Endothelial cell of umbilical vein (primary cell): ENCODE measurements at regions of chr17 and their contacts with region 1.

Region 1: GRCh38 chr17:75205037-75205792 is at the start of gene NUP85:
- DNase-seq: peak; percentile 96
- H3K4me3 ChIP-seq: peak within 1 kb of the TSS; percentile 58 to 91 (median 85)
- H3K27ac ChIP-seq: peak within 1 kb of the TSS; percentile 90
- H3K4me1 ChIP-seq: peaks cover 2% of the 10 kb centered on the region
- H3K27me3 ChIP-seq: no peaks in the 10 kb centered on the region
- CTCF ChIP-seq: no peak
- POLR2A ChIP-seq: peak; percentile 88
- total RNA-seq, gene NUP85: 98.3 and 105 TPM in 2 replicates

Region 2: GRCh38 chr17:75012346-75013091 is 192.7 kb before region 1 on chr17 and contains the start of gene MRPL58:
- CTCF ChIA-PET with region 1: interaction called, 17 read pairs
- POLR2A ChIA-PET with region 1: no interaction called
- dilution Hi-C with region 1: no loop called
- intact Hi-C with region 1: no loop called
- DNase-seq: peak; percentile 81
- H3K4me3 ChIP-seq: peak within 1 kb of the TSS; percentile 56 to 89 (median 83)
- H3K27ac ChIP-seq: peak within 1 kb of the TSS; percentile 67
- H3K4me1 ChIP-seq: peaks cover 16% of the 10 kb centered on the region
- H3K27me3 ChIP-seq: no peaks in the 10 kb centered on the region
- CTCF ChIP-seq: peak; percentile 40 to 76
- POLR2A ChIP-seq: peak; percentile 84
- total RNA-seq, gene MRPL58: 38.0 and 38.8 TPM in 2 replicates

Region 3: DNA sequence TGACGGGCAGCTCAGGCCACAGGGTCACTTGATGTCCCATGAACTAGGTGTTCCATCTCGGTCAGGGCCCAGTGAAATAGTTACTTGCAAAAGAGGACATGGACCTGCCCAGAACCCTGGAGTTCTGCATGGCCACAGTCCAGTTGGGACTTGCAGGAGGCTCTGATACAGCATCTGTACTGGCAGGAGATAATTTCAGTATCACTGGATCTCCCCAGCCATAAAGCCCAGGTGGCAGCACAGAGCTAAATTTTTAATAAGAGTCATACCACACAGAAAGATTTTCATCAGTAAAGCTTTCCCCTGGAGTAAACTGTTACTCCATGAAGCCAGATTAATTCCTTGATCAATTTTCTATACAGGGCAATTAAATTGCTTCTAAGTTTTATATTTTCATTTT is 135.4 kb before region 1 on chr17:
- CTCF ChIA-PET with region 1: interaction called, 52 read pairs
- POLR2A ChIA-PET with region 1: interaction called, 3 read pairs
- dilution Hi-C with region 1: no loop called
- intact Hi-C with region 1: no loop called
- DNase-seq: peak; percentile 45
- H3K4me3 ChIP-seq: no peak overlapping the region
- H3K27ac ChIP-seq: no peak overlapping the region
- H3K4me1 ChIP-seq: peaks cover 6% of the 10 kb centered on the region
- H3K27me3 ChIP-seq: no peaks in the 10 kb centered on the region
- CTCF ChIP-seq: peak in 1 of 2 donors; percentile 23
- POLR2A ChIP-seq: no peak

Region 4: GRCh38 chr17:75131280-75132017 is 73.8 kb before region 1 on chr17 and contains the start of gene NT5C:
- CTCF ChIA-PET with region 1: interaction called, 10 read pairs
- POLR2A ChIA-PET with region 1: no interaction called
- dilution Hi-C with region 1: no loop called
- intact Hi-C with region 1: no loop called
- DNase-seq: peak; percentile 73
- H3K4me3 ChIP-seq: peak within 1 kb of the TSS; percentile 47 to 53 (median 50)
- H3K27ac ChIP-seq: peak within 1 kb of the TSS; percentile 51
- H3K4me1 ChIP-seq: peaks cover 9% of the 10 kb centered on the region
- H3K27me3 ChIP-seq: no peaks in the 10 kb centered on the region
- CTCF ChIP-seq: peak; percentile 72
- POLR2A ChIP-seq: peak; percentile 83
- total RNA-seq, gene NT5C: 32.6 and 39.2 TPM in 2 replicates

Region 5: DNA sequence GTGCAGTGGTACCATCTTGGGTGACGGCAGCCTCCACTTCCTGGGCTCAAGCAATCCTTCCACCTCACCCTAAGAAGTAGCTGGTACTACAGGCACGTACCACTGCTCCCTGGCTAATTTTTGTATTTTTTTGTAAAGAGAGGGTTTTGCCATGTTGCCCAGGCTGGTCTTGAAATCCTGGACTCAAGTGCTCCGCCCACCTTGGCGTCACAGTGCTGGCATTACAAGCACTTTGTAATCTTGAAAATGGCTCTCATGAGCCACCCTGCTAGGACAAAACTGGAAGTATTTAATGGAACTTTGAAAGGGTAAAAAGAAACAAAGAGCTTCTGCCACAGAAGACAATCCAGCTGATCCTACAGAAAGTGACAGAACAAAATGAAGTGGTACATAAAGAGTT is 31.7 kb before region 1 on chr17:
- CTCF ChIA-PET with region 1: interaction called, 32 read pairs
- POLR2A ChIA-PET with region 1: no interaction called
- dilution Hi-C with region 1: no loop called
- intact Hi-C with region 1: no loop called
- DNase-seq: no peak
- H3K4me3 ChIP-seq: no peak overlapping the region
- H3K27ac ChIP-seq: no peak overlapping the region
- H3K4me1 ChIP-seq: no peaks in the 10 kb centered on the region
- H3K27me3 ChIP-seq: no peaks in the 10 kb centered on the region
- CTCF ChIP-seq: no peak
- POLR2A ChIP-seq: no peak

Region 6: DNA sequence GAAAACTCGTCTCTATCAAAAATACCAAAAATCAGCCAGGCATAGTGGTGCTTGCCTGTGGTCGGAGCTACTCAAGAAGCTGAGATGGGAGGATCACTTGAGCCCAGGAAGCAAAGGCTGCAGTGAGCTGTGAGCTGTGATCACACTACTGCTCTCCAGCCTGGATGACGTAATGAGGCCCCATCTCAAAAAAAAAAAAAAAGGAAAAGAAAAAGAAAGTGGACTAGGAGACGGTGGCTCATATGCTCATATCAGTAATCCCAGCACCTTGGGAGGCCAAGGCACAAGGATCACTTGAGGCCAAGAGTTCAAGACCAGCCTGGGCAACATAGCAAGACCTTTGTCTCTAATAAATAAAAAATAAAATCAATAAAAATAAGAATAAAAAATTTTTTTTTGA is 13.6 kb before region 1 on chr17:
- CTCF ChIA-PET with region 1: interaction called, 16 read pairs
- POLR2A ChIA-PET with region 1: interaction called, 3 read pairs
- dilution Hi-C with region 1: no loop called
- intact Hi-C with region 1: no loop called
- DNase-seq: no peak
- H3K4me3 ChIP-seq: no peak overlapping the region
- H3K27ac ChIP-seq: no peak overlapping the region
- H3K4me1 ChIP-seq: no peaks in the 10 kb centered on the region
- H3K27me3 ChIP-seq: no peaks in the 10 kb centered on the region
- CTCF ChIP-seq: no peak
- POLR2A ChIP-seq: no peak